BJ (cell line): ENCODE measurements at regions of chrX and their contacts with region 1.

Region 1: DNA sequence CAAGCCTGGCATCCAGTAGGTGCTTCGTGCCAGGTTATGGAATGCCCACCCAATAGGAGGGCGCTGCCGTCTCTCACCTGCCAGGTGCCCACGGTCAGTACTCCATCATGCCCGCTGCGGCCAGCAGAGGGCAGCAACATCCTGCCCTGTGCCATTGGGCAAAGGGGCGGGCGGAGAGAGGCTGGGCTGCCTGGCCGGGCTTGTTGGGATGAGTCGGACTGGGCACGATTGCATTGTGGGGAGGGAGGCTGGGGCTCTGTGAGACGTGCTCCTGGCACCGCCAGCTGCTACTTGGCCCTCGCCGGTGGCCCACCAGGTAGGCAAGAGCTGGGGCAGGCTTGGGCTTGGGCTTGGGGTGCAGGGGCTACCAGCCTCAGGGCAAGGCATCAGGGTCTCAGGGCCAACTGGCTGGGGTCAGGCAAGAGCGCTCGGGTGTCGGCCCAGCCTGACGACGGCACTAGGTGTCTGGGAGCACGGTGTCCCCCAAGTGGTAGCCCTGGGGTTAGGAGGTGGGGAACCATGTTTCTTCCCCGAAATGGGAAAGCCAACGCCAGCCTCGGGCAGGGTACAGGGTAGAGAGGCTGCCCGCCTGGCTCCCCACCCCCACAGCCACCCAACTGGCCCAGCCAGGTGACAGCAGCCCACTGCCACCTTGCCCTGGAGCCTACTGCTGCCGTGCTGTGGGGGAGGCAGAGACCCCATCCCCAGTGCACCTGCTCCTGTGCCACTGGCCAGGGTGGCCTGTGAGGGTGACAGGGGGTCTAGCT is at the start of gene PLXNB3:
- DNase-seq: peak; percentile 4
- H3K4me3 ChIP-seq: peak within 1 kb of the TSS; percentile 33
- H3K27me3 ChIP-seq: no peaks in the 10 kb centered on the region
- CTCF ChIP-seq: peak; percentile 79
- polyA plus RNA-seq, gene PLXNB3: 4.7 and 8.2 TPM in 2 replicates

Region 2: DNA sequence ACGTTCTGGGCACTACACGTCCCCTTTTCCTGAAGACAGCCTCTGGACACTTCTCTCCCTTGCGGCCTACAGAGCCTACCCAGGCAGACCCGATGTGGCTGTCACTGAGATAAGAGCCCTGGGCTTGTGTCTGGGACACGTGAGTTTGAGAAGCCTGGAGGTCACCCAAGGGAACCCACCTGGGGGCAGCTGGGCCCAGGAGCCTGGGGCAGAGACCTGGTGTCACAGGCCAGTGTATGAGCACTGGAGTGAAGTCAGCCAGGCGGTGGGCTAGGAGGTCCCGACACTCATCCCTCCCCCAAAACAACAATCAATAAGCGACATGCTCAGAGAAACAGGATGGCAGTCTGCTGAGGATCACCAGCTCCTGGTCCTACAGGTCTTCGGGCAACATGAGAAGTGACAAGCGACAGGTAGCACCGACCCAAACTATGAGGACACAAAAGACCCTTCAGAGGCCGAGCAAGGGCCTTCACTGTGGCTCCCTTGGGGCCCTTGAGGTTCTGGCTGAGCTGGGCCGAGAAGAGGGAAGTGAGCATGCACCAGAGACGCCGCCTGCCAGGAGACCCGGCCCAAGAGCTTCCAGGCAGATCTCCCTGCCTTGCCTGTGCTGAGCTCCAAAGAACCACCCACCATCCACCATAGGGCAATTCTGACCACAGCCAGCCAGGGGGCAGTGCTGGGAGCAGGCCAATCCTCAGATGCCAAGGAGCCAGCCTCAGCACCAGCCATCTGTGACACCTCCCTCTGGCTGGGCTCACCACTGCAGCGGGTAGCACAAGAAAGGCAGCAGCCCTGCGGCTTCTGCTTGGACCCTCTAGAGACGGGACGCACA is 128.2 kb before region 1 on chrX:
- CTCF ChIA-PET with region 1: no interaction called
- POLR2A ChIA-PET with region 1: no interaction called
- DNase-seq: no peak
- H3K4me3 ChIP-seq: no peak overlapping the region
- H3K27me3 ChIP-seq: peaks cover 3% of the 10 kb centered on the region; the same call in 1 of the 2 replicates
- CTCF ChIP-seq: peak; percentile 40

Region 3: GRCh38 chrX:153744214-153744724 is 19.9 kb before region 1 on chrX:
- CTCF ChIA-PET with region 1: no interaction called
- POLR2A ChIA-PET with region 1: no interaction called
- DNase-seq: no peak
- H3K4me3 ChIP-seq: no peak overlapping the region
- H3K27me3 ChIP-seq: no peaks in the 10 kb centered on the region
- CTCF ChIP-seq: peak; percentile 25; the same call in 1 of the 2 replicates

Region 4: GRCh38 chrX:153857348-153857903 is 93.3 kb after region 1 on chrX:
- CTCF ChIA-PET with region 1: no interaction called
- POLR2A ChIA-PET with region 1: no interaction called
- DNase-seq: no peak
- H3K4me3 ChIP-seq: no peak overlapping the region
- H3K27me3 ChIP-seq: no peaks in the 10 kb centered on the region
- CTCF ChIP-seq: no peak

Region 5: DNA sequence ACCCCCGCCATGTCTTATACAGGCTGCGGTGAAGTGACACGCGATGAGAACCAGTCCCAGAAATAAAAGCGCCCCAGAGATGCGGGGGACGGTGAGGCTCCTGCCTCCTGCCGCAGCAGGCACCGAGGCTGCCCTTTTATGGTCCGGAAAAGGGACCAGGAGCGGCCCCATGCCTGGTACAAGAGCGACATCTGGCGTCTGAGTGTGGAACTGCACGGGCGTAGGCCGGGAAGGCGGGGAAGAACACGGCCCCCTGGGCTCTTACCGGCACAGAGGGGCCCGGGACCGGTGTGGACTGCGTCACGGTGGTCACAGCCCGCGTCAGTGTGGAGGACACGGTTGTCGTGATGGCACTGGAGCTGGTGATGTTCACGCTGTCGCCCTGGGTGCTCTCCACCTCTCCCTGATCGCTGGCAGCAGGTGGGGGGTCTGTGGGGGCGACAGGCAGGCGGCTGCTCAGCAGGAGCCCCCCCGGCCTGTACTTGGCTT is 189.2 kb after region 1 on chrX:
- CTCF ChIA-PET with region 1: interaction called, 19 read pairs
- POLR2A ChIA-PET with region 1: no interaction called
- DNase-seq: no peak
- H3K4me3 ChIP-seq: no peak overlapping the region
- H3K27me3 ChIP-seq: no peaks in the 10 kb centered on the region
- CTCF ChIP-seq: peak; percentile 90